Transverse colon (tissue), 4 donors: ENCODE measurements at regions of chr7 and their contacts with region 1.

Region 1: DNA sequence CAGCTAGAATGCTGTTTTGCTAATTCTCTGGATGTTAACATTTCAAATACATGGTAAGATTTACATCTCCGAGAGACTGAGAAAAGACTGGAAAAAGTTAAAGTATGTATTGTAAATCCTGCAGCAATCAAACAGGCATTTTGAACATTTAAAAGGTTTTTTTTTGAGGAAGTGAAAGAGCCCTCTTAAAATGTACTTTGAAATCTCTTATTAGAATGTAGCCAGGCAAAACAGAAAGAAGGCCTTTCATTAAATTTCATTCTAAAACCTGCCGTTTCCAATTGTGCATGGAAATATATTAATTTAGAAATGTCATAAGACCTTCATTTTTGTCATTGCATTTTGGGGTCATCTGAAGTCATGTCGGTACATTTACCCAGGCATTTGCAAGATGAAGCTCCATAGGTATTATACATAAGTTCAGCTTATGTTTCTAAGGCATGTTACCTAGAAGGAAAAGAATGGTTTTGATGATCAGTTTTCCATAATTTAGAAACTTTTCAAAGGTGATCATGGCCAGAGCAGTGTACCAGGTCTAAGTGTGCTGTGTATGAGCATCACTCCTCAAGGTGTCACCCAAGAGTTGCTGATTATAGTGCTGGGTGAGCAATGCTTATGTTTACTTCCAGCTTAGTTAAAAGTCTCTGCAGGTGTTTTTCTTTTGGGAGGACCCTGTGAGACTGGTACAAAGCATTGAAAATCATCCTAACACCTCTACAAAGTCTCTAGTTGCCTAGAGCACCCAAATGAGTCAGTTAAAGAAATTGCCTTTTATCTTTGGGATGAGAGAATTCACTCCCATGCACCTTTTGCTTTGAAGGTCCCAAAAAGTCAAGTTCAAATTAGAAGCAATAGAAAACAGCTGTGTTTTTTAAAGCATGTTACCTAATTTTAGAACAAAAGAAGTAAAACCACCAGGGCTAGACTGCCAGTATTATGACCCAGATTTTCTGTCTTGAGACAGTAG is 7.1 kb downstream of the ZNF736 start:
- DNase-seq: no peak
- H3K4me3 ChIP-seq: no peak overlapping the region
- H3K27ac ChIP-seq: no peak overlapping the region
- H3K4me1 ChIP-seq: peaks cover 0 to under 1% (median 0%) of the 10 kb centered on the region in 4 donors
- H3K27me3 ChIP-seq: no peaks in the 10 kb centered on the region
- CTCF ChIP-seq: no peak
- EP300 ChIP-seq: no peak
- POLR2A ChIP-seq: no peak

Region 2: GRCh38 chr7:64494912-64495461 is 174.2 kb after region 1 on chr7:
- in situ Hi-C with region 1: loop called in 1 of 4 experiments (anchors 25 kb)
- intact Hi-C with region 1: no loop called
- DNase-seq: no peak
- H3K4me3 ChIP-seq: no peak overlapping the region
- H3K27ac ChIP-seq: no peak overlapping the region
- H3K4me1 ChIP-seq: no peaks in the 10 kb centered on the region
- H3K27me3 ChIP-seq: no peaks in the 10 kb centered on the region
- CTCF ChIP-seq: no peak
- EP300 ChIP-seq: no peak
- POLR2A ChIP-seq: no peak